Prostate gland (tissue), 2 donors: ENCODE measurements at regions of chr22 and their contacts with region 1.

Region 1: DNA sequence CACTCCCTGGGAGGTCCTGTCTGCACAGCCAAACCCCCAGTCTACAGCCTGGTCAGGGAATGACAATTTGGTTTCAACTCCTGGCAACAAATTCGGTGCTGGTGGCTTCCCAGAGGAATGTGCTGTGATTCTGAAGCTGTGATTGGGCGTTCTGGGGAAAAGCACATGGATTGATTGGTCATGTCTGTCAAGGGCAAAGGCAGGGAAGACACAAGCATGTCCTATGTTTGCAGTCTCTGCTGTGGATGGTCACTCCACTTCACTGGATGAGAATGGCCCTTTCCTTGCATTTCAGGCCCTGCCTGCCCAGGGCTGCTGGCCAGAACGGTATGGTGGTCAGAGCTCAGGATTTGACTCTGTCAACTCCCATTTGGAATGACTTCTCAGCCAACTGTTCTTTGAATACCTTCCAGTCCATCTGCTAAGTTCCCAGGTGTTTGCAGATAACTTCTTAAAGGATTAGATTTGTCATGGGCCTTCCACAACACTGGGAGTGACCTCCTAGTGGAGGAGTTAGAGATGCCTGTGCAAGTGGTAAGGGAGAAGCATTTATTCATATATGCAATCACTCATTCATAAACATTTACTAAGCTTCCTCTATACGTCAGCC is 42.7 kb downstream of the SGSM1 start:
- DNase-seq: no peak
- H3K4me3 ChIP-seq: no peak overlapping the region
- H3K27ac ChIP-seq: no peak overlapping the region
- H3K4me1 ChIP-seq: no peaks in the 10 kb centered on the region
- H3K27me3 ChIP-seq: no peaks in the 10 kb centered on the region
- CTCF ChIP-seq: no peak
- POLR2A ChIP-seq: no peak

Region 2: GRCh38 chr22:24768537-24769374 is 79.9 kb before region 1 on chr22:
- intact Hi-C with region 1: loop called (anchors 1 kb)
- DNase-seq: peak; percentile 81
- H3K4me3 ChIP-seq: no peak overlapping the region
- H3K27ac ChIP-seq: no peak overlapping the region
- H3K4me1 ChIP-seq: no peaks in the 10 kb centered on the region
- H3K27me3 ChIP-seq: no peaks in the 10 kb centered on the region
- CTCF ChIP-seq: peak in 3 of 4 experiments; percentile 67 to 84 (median 79)
- POLR2A ChIP-seq: no peak

Region 3: DNA sequence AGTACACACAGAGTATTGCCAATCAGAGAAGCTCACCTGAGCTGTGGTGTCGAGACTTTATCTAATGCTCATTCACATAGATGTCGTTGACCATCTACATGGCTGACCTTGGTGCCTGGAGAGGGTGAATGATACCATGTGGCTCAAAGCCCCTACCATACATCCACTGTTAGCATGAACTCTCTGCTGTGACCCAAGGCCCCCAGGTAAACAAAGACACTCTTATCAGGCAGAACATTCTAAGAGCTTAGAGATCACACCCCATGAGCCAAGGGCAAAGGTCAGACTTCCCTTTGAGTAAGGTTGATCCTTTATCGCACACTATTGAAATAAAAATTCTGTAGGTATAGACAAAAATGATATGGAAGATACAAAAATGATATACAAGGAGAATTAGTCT is 59.1 kb before region 1 on chr22:
- intact Hi-C with region 1: no loop called
- DNase-seq: no peak
- H3K4me3 ChIP-seq: no peak overlapping the region
- H3K27ac ChIP-seq: no peak overlapping the region
- H3K4me1 ChIP-seq: no peaks in the 10 kb centered on the region
- H3K27me3 ChIP-seq: no peaks in the 10 kb centered on the region
- CTCF ChIP-seq: no peak
- POLR2A ChIP-seq: no peak